Endothelial cell of umbilical vein (primary cell): ENCODE measurements at regions of chr1 and their contacts with region 1.

Region 1: GRCh38 chr1:50978144-50978851 is 8.3 kb downstream of the CDKN2C start:
- DNase-seq: peak; percentile 50
- H3K4me3 ChIP-seq: peak overlapping the region; percentile 60 to 90 (median 61)
- H3K27ac ChIP-seq: peak overlapping the region; percentile 37
- H3K4me1 ChIP-seq: peaks cover 13% of the 10 kb centered on the region
- H3K27me3 ChIP-seq: no peaks in the 10 kb centered on the region
- CTCF ChIP-seq: no peak
- POLR2A ChIP-seq: no peak

Region 2: DNA sequence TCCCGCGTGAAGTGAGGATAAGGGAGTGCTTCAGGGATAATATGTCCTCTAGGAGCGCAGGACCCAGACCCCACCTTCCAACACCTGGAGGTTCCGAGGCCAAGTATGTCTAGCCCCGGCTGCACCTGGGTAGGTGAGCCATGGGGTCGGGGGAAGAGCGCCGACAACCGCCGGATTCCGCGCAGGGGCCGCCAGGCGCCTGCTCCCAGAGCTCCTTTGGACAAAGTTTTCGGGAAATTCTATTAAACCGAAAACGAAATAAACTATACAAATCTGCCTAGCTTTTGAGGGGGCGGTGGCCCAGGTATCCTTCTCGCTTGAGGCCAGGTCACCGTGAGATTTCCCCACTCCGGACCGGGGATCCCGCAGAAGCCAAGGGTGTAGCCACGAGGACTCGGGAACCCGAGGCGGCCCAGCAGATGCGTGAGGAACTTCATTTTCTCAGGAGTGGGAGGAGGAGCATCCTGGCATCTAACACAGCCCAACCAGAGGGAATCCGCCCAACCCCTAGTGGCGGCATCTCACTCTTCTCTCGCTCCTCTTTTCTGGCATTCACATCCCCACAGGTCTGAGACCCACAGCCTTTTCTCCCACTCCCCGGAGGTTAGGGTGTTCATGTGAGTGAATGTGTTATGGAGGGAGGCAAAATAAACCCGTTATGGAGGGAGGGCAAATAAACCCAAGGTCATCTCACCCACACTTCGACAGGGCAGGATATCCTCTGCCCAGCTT is 552.8 kb before region 1 on chr1:
- CTCF ChIA-PET with region 1: no interaction called
- POLR2A ChIA-PET with region 1: no interaction called
- dilution Hi-C with region 1: no loop called
- intact Hi-C with region 1: loop called (anchors 5 kb)
- DNase-seq: no peak
- H3K4me3 ChIP-seq: no peak overlapping the region
- H3K27ac ChIP-seq: no peak overlapping the region
- H3K4me1 ChIP-seq: peaks cover 3% of the 10 kb centered on the region
- H3K27me3 ChIP-seq: peaks cover 85 to 100% of the 10 kb centered on the region in 2 experiments
- CTCF ChIP-seq: peak in 1 of 2 donors; percentile 6
- POLR2A ChIP-seq: no peak

Region 3: GRCh38 chr1:50502147-50502546 is 476.2 kb before region 1 on chr1:
- CTCF ChIA-PET with region 1: no interaction called
- POLR2A ChIA-PET with region 1: no interaction called
- dilution Hi-C with region 1: no loop called
- intact Hi-C with region 1: no loop called
- DNase-seq: no peak
- H3K4me3 ChIP-seq: no peak overlapping the region
- H3K27ac ChIP-seq: no peak overlapping the region
- H3K4me1 ChIP-seq: no peaks in the 10 kb centered on the region
- H3K27me3 ChIP-seq: no peaks in the 10 kb centered on the region
- CTCF ChIP-seq: no peak
- POLR2A ChIP-seq: no peak

Region 4: GRCh38 chr1:50968158-50968820 is 10.0 kb before region 1 on chr1:
- CTCF ChIA-PET with region 1: interaction called, 16 read pairs
- POLR2A ChIA-PET with region 1: interaction called, 8 read pairs
- dilution Hi-C with region 1: no loop called
- intact Hi-C with region 1: loop called (anchors 1 kb)
- DNase-seq: peak; percentile 94
- H3K4me3 ChIP-seq: peak overlapping the region; percentile 62 to 90 (median 73)
- H3K27ac ChIP-seq: peak overlapping the region; percentile 66
- H3K4me1 ChIP-seq: peaks cover 26% of the 10 kb centered on the region
- H3K27me3 ChIP-seq: no peaks in the 10 kb centered on the region
- CTCF ChIP-seq: peak; percentile 30 to 53
- POLR2A ChIP-seq: peak; percentile 47

Region 5: DNA sequence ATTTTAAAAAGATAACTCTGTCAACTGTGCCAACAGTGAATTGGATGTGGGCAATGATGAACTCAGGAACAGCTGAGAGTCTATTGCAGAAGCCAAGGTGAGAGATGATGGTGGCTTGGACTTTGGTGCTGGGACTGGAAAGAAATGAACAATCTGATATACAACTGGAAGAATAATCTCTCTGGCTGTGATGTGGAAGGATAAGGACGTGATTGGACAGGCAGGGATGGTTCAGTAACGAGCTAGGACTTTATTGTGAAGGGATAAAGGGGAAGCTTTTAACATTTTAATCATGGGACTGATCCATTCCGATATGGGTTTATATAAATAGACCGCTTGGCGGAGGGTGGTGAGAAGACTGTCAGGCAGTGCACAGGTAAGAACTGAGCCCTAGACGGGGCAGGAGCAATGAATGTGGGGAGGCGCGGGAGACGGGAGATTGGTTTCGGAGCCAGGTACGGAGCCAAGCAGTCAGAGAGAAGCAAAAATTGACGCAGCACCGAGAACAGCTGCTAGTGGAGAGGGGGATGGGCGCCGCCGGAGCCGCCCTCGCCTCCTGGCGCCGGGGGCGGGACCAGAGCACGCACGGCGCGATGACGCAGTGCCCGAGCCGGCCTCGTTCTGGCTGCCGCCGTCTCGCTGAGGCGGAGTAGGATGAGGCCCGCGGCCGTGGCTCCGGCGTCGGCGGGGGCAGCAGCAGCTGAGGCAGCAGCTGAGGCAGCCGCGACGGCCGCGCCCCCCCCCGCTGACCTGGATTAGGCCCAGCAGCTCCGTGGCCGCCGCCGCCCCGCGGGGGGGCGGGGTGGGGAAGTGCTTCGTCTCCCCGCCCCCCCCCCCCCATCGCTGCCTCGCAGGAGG is 257.6 kb after region 1 on chr1 and contains the start of gene RNF11:
- CTCF ChIA-PET with region 1: no interaction called
- POLR2A ChIA-PET with region 1: no interaction called
- dilution Hi-C with region 1: no loop called
- intact Hi-C with region 1: loop called (anchors 1 kb)
- DNase-seq: peak; percentile 91
- H3K4me3 ChIP-seq: peak within 1 kb of the TSS; percentile 88 to 98 (median 91)
- H3K27ac ChIP-seq: peak within 1 kb of the TSS; percentile 97
- H3K4me1 ChIP-seq: peaks cover 23% of the 10 kb centered on the region
- H3K27me3 ChIP-seq: no peaks in the 10 kb centered on the region
- CTCF ChIP-seq: peak in 1 of 2 donors; percentile 0
- POLR2A ChIP-seq: peak; percentile 95
- total RNA-seq, gene RNF11: 82.9 and 94.4 TPM in 2 replicates